ENCODE measurements at regions of chr19 and their contacts with region 1.

Region 1: GRCh38 chr19:40139533-40140287 is 49.0 kb upstream of the ZNF780A start:
- DNase-seq: peak; percentile 27
- H3K4me3 Mint-ChIP-seq: no peak overlapping the region
- H3K27ac Mint-ChIP-seq: no peak overlapping the region
- H3K4me1 Mint-ChIP-seq: peaks cover 31% of the 10 kb centered on the region
- H3K27me3 Mint-ChIP-seq: peaks cover 23% of the 10 kb centered on the region

Region 2: DNA sequence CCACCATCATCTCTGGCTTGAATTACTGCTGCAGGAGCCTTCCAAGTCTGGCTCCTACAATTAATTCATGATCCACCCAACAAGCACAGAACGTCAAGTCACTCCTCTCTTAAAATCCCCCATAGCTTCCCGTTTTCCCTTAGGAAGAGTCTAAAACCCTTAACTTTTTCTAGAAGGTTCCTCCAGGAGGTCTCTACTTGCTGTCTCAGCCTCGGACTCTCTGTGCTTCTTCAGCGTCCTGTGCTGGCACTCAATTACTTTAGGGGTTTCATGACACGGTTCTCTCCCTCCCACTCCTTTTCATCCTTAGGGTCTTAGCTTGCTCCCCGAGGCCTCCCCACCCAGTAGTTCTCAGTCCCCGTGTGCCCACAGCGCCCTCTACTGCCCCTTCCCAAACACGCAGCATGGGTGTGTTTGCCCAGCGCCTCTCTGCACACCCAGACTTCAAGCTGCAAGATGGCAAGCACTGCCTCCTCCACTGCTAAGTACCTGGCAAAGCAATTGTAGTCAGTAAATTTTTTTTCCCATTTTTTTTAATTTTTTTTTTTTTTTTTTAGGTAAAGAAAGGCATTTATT is 25.7 kb after region 1 on chr19:
- CTCF ChIA-PET with region 1: interaction called, 38 read pairs
- DNase-seq: peak; percentile 78
- H3K4me3 Mint-ChIP-seq: no peak overlapping the region
- H3K27ac Mint-ChIP-seq: peak overlapping the region; percentile 3
- H3K4me1 Mint-ChIP-seq: peaks cover 22% of the 10 kb centered on the region
- H3K27me3 Mint-ChIP-seq: peaks cover 7% of the 10 kb centered on the region